KBM-7 (cell line): ENCODE measurements at regions of chr2 and their contacts with region 1.

Region 1: GRCh38 chr2:195343942-195344530 is 313.0 kb upstream of the SLC39A10 start:
- DNase-seq: no peak

Region 2: DNA sequence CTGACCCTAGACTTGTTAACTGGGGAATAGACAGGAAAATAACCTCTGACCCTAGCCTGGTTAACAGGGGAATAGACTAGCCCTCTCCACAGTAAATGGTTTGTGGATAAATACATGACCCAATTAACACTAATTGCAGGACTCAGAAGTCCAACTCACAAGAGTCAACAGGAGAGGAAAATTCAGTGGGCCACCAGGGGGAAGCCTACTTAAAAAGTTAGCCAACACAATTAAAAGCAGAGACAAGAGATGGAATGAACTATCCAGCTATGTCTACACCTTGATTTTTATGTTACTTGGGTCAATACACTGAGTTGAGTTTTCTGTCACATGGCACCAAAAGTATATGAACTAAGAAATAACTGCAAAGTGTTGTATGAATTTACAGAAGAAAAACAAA is 154.1 kb after region 1 on chr2:
- in situ Hi-C with region 1: loop called (anchors 25 kb)
- DNase-seq: peak; percentile 67

Region 3: GRCh38 chr2:195656859-195657633 is 313.0 kb after region 1 on chr2 and contains the start of gene SLC39A10:
- in situ Hi-C with region 1: loop called (anchors 25 kb)
- DNase-seq: peak; percentile 100